Transverse colon (tissue), 4 donors: ENCODE measurements at regions of chr7 and their contacts with region 1.

Region 1: DNA sequence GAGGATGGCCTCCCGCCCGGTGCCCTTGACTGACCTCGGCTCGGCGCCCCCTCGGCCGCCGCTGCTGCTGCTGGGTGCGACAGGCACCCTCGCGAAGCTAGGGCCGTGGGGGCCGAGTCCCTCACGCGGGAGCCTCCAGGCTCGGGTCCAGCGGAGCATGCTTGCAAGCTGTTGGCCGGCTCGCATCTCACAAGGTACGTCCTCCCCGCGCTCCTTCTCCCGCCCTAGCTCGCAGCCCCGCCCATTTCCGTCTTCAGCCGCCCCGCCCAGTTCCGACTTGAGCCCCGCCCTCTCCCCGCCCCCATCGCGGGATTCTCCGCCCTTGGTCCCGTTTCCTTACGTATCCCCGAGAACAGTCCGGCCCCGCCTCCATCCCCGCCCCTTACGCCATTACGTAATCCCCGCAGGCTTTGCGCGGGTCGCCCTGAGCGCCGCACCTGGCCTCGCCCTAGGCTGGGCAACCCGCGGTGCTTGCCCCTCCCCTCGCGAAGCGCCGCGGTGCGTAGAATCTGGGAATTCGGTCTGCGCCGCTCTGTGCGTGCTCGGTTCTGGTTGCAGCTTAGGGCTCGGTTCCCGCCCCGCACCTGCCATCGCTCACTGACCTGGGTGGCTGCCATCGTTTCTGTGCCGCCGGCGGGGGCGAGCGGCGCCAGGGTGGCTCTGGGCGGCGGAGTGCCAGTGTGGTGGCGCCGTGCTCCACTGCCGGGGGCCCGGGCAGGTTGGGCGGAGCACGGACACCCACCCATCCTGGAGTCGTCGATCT is at the start of gene ABHD11:
- DNase-seq: peak; percentile 100
- H3K4me3 ChIP-seq: peak within 1 kb of the TSS; percentile 65 to 95 (median 86)
- H3K27ac ChIP-seq: peak within 1 kb of the TSS; percentile 92 to 98 (median 96)
- H3K4me1 ChIP-seq: peaks cover 14 to 67% (median 52%) of the 10 kb centered on the region in 4 donors
- H3K27me3 ChIP-seq: no peaks in the 10 kb centered on the region
- CTCF ChIP-seq: no peak
- EP300 ChIP-seq: peak; percentile 22
- POLR2A ChIP-seq: peak; percentile 95
- total RNA-seq, gene ABHD11: 108 to 177 (median 117) TPM

Region 2: DNA sequence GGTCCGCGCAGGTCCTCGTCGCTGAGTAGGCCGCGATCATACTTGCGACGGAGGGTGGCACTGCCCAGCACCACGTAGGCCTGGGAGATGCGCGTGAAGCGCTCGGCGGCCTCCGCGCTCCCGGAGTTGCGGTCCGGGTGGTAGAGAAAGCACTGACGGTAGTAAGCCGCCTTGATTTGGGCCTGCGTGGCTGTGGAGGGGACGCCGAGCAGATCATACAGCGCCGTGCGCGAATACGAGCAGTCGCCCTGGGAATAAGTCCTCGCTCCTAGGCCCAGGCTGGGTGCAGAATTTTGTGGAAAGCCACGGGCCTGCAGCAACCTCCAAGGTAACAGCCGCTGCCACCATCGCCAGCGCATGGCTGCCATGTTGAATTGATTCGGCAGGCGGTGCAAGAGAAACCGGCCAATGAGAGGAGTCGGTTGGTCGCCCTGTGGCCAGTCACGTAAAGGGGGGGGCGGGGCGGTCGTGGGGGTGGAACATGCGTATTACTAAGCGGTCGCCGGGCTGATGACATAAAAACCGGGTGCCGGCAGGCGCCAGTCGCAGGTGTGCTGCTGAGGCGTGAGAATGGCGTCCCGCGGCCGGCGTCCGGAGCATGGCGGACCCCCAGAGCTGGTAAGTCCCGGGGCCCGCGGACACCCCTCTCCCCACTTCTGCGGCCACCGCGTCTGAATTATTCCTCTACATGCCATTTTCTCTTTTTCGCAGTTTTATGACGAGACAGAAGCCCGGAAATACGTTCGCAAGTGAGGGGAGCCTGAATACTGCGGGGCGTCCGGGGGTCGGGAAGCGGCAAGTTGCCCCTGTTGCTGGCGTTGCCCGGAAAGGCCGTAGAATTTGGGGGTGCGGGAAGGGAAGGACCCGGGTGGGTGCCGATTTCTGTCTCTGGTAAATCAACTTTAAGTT is 55.5 kb before region 1 on chr7 and contains the starts of genes BUD23 and DNAJC30:
- in situ Hi-C with region 1: no loop called
- intact Hi-C with region 1: loop called (anchors 10 kb)
- DNase-seq: peak; percentile 98
- H3K4me3 ChIP-seq: peak within 1 kb of the TSS; percentile 50 to 94 (median 84)
- H3K27ac ChIP-seq: peak within 1 kb of the TSS; percentile 81 to 94 (median 86)
- H3K4me1 ChIP-seq: peaks cover 13 to 36% (median 27%) of the 10 kb centered on the region in 4 donors
- H3K27me3 ChIP-seq: no peaks in the 10 kb centered on the region
- CTCF ChIP-seq: peak in 2 of 5 experiments; percentile 9 to 44
- EP300 ChIP-seq: no peak
- POLR2A ChIP-seq: peak; percentile 77
- total RNA-seq, gene BUD23: 12.0 to 55.9 (median 30.3) TPM
- total RNA-seq, gene DNAJC30: 1.9 to 26.7 (median 6.8) TPM

Region 3: GRCh38 chr7:73703757-73704639 is 34.8 kb before region 1 on chr7:
- in situ Hi-C with region 1: no loop called
- intact Hi-C with region 1: no loop called
- DNase-seq: peak; percentile 71
- H3K4me3 ChIP-seq: peak overlapping the region in 2 of 4 donors; percentile 19 to 41
- H3K27ac ChIP-seq: peak overlapping the region in 3 of 4 donors; percentile 2 to 68 (median 48)
- H3K4me1 ChIP-seq: peaks cover 7 to 21% (median 17%) of the 10 kb centered on the region in 4 donors
- H3K27me3 ChIP-seq: no peaks in the 10 kb centered on the region
- CTCF ChIP-seq: no peak
- EP300 ChIP-seq: no peak
- POLR2A ChIP-seq: no peak